H1 (cell line): ENCODE measurements at regions of chr5 and their contacts with region 1.

Region 1: GRCh38 chr5:170357955-170358444 is 31.2 kb downstream of the KCNMB1 start:
- DNase-seq: no peak
- H3K4me3 ChIP-seq: no peak overlapping the region
- H3K27ac ChIP-seq: no peak overlapping the region
- H3K4me1 ChIP-seq: peaks cover 5 to 20% (median 13%) of the 10 kb centered on the region in 4 experiments
- H3K27me3 ChIP-seq: peaks cover 0 to 4% (median 1%) of the 10 kb centered on the region in 4 experiments; a peak in 3 of 7 replicates
- CTCF ChIP-seq: no peak
- EP300 ChIP-seq: no peak
- POLR2A ChIP-seq: no peak
- RAD21 ChIP-seq: no peak

Region 2: DNA sequence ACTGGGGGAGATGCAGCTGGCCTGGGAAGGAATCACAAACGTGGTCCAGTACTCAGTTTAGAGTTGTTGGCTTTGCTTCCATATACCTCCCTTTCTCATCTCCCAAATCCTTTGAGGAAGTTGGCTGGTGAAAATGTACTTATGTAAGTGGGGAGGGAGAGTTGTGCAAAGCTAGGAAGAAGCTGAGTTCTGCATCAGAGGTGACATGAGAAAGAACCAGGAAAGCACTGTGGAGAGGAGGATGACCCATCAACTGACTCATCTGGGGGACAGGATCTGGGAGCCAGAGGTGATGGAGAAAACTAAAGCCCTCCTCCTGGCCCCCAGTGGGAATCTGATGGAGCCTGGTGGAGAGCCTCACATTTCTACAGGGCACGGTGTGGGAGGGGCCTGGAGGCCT is 15.0 kb after region 1 on chr5:
- CTCF ChIA-PET with region 1: interaction called, 10 read pairs
- POLR2A ChIA-PET with region 1: no interaction called
- DNase-seq: no peak
- H3K4me3 ChIP-seq: no peak overlapping the region
- H3K27ac ChIP-seq: no peak overlapping the region
- H3K4me1 ChIP-seq: no peaks in the 10 kb centered on the region
- H3K27me3 ChIP-seq: no peaks in the 10 kb centered on the region
- CTCF ChIP-seq: no peak
- EP300 ChIP-seq: no peak
- POLR2A ChIP-seq: no peak
- RAD21 ChIP-seq: no peak